Motor neuron (in vitro differentiated cells): ENCODE measurements at regions of chr3 and their contacts with region 1.

Region 1: GRCh38 chr3:138935848-138936740 is 10.8 kb downstream of the FOXL2 start:
- ATAC-seq: peak; percentile 83 to 93 (median 88)
- H3K4me3 ChIP-seq: peak overlapping the region; percentile 35 to 69 (median 46)
- H3K27ac ChIP-seq: no peak overlapping the region
- H3K4me1 ChIP-seq: peaks cover 0 to 6% of the 10 kb centered on the region in 2 donors

Region 2: DNA sequence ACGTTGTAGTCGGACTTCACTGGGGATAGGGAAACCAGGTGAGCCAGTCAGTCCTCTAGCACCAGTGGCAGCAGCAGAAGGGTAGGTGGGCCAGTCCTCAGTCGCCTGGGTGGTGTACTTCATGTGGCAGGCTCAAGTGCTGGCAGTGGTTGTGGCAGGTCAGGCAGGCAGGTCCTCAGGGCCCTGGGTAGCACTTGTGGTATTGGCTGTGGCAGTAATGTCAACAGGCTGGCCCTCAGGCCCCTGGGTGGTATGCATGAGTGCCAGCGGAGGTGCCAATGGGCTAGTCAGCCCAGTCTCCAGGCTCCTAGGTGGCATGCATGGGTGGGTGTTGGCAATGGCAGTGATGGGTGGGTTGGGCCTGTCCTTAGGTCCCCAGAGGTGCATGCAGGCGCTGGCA is 287.0 kb before region 1 on chr3:
- in situ Hi-C with region 1: no loop called
- ATAC-seq: no peak
- H3K4me3 ChIP-seq: no peak overlapping the region
- H3K27ac ChIP-seq: no peak overlapping the region
- H3K4me1 ChIP-seq: no peaks in the 10 kb centered on the region

Region 3: DNA sequence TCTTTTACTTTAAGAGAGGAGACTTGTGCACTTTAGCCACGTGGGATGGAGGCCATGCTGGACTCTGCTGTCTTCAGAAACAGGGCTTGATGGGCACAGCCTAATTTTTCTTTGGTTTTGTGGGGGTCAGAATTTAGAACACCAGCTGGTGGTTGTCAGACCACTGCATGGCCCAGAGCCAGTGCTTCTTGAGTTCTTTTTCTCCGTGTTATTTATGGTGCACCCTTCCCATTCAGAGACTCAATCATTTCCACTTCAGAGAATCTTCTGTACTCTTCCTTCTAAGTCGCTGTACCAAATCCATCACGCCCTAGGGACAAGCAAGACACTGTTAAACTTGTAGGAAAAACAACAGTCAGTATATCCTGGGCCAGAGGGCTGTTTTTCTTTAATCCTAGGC is 49.8 kb after region 1 on chr3:
- in situ Hi-C with region 1: loop called in 1 of 9 experiments (anchors 10 kb)
- ATAC-seq: peak in 3 of 8 experiments; percentile 24 to 57 (median 41)
- H3K4me3 ChIP-seq: no peak overlapping the region
- H3K27ac ChIP-seq: no peak overlapping the region
- H3K4me1 ChIP-seq: peaks cover 2 to 8% of the 10 kb centered on the region in 2 donors

Region 4: DNA sequence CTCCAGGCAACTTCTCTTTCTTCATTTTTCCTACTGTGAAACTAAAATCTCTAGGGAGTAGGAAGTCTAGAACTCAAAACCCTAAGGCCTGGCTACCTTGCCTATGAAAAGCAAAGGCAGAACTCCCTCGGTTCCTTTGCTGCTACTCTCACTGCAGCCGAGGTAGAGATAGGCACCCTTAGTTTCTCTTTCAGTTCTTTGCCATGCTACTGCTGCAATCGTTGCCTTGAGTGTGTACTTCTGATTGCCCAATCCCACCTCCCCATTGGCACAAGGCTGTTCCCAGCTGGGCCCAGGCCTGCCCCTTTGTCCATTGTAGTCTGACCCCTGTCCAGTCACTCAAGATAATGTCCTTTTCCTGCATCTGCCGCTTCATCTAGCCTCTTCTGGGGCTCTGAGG is 315.4 kb after region 1 on chr3:
- in situ Hi-C with region 1: no loop called
- ATAC-seq: no peak
- H3K4me3 ChIP-seq: no peak overlapping the region
- H3K27ac ChIP-seq: no peak overlapping the region
- H3K4me1 ChIP-seq: no peaks in the 10 kb centered on the region

Region 5: DNA sequence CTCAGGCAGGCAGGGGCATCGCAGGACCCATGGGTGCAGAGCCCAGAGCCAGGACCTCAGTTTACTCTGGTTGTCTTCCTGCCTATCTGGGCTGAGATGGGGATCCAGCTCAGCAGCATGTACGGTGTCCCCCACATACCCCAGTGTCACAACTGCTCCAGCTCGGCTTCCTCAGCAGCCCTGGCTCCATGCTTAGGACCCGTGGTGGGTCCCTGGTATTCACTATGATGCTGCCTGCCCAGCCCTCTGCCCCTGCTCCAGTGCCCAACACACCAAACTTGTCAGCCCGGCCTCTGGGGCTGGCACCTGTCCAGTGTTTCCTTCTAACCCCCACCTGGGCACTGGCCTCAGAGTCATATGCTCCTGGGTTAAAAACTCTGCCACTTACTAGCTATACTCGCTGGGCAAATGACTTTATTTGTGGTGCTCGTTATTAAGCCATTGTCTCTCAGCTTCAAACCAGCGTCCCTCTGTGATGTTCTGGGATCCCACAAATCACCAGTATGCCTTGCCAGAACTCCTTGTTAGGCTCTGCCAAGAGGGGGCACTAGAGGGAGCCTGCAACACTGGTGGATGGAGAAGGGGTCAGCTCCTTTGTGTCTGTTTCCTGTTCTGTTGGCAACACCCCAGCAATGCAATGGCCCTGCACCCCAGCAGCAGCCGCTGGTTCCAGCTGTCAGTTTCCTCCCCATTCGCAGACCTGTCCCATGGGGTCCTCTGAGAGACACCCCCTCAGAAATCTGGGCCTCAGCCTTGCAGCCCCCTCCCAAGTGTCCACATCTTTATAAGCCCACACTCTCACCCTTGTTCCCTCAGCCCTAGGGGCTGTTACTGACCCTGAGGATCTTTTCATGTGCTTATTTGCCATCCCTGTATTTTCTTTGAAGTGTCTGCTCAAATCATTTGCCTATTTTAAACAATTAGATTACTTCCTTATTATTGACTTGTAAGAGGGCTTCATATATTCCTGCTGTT is 383.6 kb after region 1 on chr3:
- in situ Hi-C with region 1: loop called in 2 of 9 experiments (anchors 25 kb)
- ATAC-seq: peak in 2 of 8 experiments; percentile 21 to 32
- H3K4me3 ChIP-seq: no peak overlapping the region
- H3K27ac ChIP-seq: no peak overlapping the region
- H3K4me1 ChIP-seq: no peaks in the 10 kb centered on the region

Region 6: DNA sequence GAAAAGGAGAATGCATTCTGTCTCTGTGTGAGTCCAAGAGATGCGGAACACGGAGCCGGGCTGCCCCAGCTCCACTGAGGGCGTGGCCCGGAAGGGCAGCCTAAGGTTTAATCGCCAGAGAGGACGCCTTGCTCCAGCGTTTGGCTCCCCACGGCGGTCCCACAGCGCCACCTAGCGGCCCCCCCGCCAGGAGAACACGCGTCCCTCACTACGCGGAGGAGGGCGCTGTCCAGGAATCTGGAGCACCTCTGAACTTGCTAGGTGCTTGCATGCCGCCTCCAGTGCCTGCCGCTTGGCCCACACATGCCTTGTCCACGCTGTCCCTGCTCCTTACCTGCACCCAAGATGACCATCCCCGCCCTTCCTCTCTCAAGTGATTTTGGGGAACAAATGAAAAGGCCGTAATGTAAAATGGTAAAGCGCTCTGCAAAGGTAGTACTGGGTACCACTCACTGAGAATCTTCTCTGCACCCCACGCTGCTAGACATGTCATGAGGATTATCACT is 393.3 kb after region 1 on chr3:
- in situ Hi-C with region 1: loop called in 3 of 9 experiments (anchors 25 kb)
- ATAC-seq: peak; percentile 99 to 100 (median 100)
- H3K4me3 ChIP-seq: peak overlapping the region; percentile 8 to 24 (median 19)
- H3K27ac ChIP-seq: no peak overlapping the region
- H3K4me1 ChIP-seq: no peaks in the 10 kb centered on the region